ENCODE measurements at regions of chr10 and their contacts with region 1.

Region 1: DNA sequence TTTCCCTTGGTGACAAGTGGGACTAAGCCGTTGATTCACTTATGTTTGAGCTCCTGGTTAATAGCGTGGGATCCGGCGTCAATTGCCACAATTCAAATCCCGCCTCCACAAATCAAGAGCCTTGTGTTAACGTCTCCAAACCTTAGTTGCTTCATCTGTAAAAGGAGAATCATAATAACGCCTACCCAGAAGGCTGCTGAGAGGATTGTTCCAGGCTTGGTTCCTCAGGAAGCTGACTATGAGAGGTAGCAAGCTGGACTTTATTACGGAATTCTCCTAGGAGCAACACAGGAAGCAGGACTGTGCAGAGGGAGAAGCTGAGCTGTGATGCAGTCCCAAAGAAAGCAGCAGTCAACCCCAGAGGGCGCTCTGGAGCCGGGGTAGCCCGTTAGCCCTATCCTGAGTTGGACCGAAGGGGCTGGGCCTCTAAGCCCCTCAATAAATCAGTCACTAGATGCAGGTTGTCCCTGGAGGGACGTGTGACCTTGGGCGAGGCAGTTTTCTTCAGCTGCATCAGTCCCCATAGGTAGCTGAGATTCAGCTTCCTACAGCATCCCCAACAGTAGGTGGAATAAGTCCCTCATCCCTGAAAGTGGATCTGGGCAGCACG is 6.9 kb upstream of the BAG3 start:
- DNase-seq: peak; percentile 78
- ATAC-seq: peak; percentile 99
- H3K4me3 Mint-ChIP-seq: no peak overlapping the region
- H3K27ac Mint-ChIP-seq: no peak overlapping the region
- H3K4me1 Mint-ChIP-seq: peaks cover 7% of the 10 kb centered on the region; the same call in 1 of the 2 replicates
- H3K27me3 Mint-ChIP-seq: no peaks in the 10 kb centered on the region; the same call in 1 of the 2 replicates
- CTCF ChIP-seq: peak; percentile 29; the same call in 1 of the 2 replicates

Region 2: GRCh38 chr10:119602241-119603095 is 41.8 kb before region 1 on chr10:
- CTCF ChIA-PET with region 1: interaction called, 11 read pairs
- POLR2A ChIA-PET with region 1: no interaction called
- DNase-seq: peak; percentile 73
- ATAC-seq: peak; percentile 98
- H3K4me3 Mint-ChIP-seq: no peak overlapping the region
- H3K27ac Mint-ChIP-seq: no peak overlapping the region
- H3K4me1 Mint-ChIP-seq: peaks cover 5% of the 10 kb centered on the region
- H3K27me3 Mint-ChIP-seq: peaks cover 3% of the 10 kb centered on the region; the same call in 1 of the 2 replicates
- CTCF ChIP-seq: 0 out of 2 replicates have a peak, but pooled peaks have one; percentile 39